Heart right ventricle (tissue), 16 donors: ENCODE measurements at regions of chr5 and their contacts with region 1.

Region 1: DNA sequence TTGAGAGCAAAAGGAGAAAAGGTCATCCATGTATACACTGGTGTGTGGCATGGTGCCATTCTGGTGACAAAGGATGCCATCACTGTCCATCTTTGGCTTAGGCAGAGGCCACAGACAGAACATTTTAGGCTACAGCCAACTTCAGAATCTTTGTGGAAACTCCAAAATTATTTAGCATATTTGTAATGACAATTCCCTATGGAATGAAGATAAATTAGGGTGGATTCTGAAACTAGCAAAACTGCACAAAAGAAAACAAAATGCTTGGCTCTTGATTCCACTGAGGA is 92.5 kb downstream of the FBXW11 start:
- DNase-seq: no peak
- ATAC-seq: no peak
- H3K4me3 ChIP-seq: no peak overlapping the region
- H3K27ac ChIP-seq: no peak overlapping the region
- H3K4me1 ChIP-seq: peaks cover 3 to 47% (median 43%) of the 10 kb centered on the region in 9 donors
- H3K27me3 ChIP-seq: no peaks in the 10 kb centered on the region
- CTCF ChIP-seq: no peak

Region 2: DNA sequence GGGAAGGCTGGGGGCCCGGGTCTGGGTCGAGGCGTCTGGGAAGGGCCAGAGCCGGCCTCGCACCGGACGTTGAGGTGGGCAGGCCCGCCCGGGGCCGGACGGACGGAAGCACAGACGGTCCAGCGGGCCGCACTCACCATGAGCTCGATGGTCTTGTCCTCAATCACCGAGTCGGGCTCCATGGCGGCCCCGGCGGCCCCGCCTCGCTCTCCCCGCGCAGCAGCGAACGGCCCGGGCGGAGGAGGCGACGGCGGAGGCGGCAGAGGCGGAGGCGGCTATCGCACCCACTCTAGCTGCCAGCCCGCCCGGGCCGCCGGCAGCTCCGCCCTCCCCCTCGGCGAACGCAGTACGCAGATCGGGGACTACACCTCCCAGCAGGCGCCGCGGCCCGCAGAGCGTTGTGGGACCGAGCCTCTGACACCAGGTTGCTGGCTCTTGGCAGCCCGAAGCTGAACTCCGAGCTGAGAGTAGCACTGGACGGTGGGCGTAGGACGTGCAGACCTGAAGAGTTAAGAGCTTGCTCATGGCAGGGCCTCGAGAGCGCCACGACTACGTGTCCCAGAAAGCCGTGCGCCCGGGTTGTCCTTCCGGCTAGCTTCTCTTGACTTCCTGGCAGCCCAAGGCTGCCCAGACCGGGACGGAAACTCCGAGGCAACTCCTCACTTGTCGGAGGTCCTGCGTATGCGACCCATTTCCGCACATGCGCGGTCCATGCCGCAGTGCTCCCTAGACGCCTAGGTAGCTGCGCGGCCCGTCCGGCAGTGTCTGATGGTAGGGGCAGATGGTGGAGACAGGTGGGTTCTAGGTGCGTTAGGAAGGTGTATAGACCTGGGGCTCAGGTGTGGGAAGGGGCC is 92.6 kb after region 1 on chr5 and contains the start of gene FBXW11:
- intact Hi-C with region 1: loop called in 7 of 10 experiments (anchors 2 to 10 kb)
- DNase-seq: peak; percentile 95 to 96
- ATAC-seq: peak; percentile 95 to 97 (median 96)
- H3K4me3 ChIP-seq: peak within 1 kb of the TSS; percentile 79 to 99 (median 91)
- H3K27ac ChIP-seq: peak within 1 kb of the TSS; percentile 90 to 99 (median 98)
- H3K4me1 ChIP-seq: peaks cover 20 to 65% (median 53%) of the 10 kb centered on the region in 9 donors
- H3K27me3 ChIP-seq: no peaks in the 10 kb centered on the region
- CTCF ChIP-seq: no peak
- total RNA-seq, gene FBXW11: 51.4 to 108 (median 83.3) TPM

Region 3: GRCh38 chr5:172035039-172035438 is 121.1 kb after region 1 on chr5:
- intact Hi-C with region 1: loop called (anchors 1 to 5 kb)
- DNase-seq: no peak
- ATAC-seq: no peak
- H3K4me3 ChIP-seq: no peak overlapping the region
- H3K27ac ChIP-seq: no peak overlapping the region
- H3K4me1 ChIP-seq: peaks cover 0 to 5% (median 0%) of the 10 kb centered on the region in 9 donors
- H3K27me3 ChIP-seq: no peaks in the 10 kb centered on the region
- CTCF ChIP-seq: no peak

Region 4: DNA sequence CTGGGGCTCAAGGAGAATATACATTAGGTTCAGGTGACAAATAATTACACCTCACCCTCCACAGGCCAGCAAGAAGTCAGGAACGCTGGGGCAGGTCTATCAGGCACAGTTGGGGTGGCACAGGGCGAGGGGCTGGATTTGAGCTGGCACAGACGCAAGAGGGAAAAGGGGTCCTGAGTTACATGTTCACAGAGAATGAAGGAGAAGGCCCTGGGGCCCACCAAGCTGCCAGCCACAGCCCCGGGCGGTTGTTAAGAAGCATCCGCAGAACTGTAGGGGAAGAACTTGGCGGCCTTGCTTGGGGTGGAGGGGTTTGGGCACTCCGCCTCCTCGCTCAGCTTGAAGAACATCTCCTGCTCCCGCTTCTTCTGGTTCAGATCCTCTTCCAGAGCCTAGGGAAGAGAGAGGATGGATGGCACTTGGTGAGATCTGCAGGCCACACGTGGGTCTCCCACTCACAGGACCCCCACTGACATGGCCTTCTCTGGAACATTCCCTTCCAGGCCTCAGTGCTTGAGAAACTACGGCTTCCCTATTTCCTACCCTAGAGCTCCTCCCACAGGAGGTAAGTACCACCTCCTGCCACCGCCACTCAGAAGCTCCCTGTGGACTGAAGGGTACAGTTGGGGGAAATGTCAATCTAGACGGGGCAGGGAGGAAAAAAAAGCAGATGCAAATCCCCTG is 130.8 kb after region 1 on chr5:
- intact Hi-C with region 1: loop called (anchors 1 to 5 kb)
- DNase-seq: no peak
- ATAC-seq: no peak
- H3K4me3 ChIP-seq: no peak overlapping the region
- H3K27ac ChIP-seq: peak overlapping the region in 1 of 10 donors; percentile 15
- H3K4me1 ChIP-seq: peaks cover 0 to 28% (median 14%) of the 10 kb centered on the region in 9 donors
- H3K27me3 ChIP-seq: no peaks in the 10 kb centered on the region
- CTCF ChIP-seq: no peak

Region 5: GRCh38 chr5:172059661-172060100 is 145.8 kb after region 1 on chr5:
- intact Hi-C with region 1: loop called in 3 of 10 experiments (anchors 5 kb)
- DNase-seq: no peak
- ATAC-seq: peak in 3 of 8 donors; percentile 13 to 28 (median 26)
- H3K4me3 ChIP-seq: no peak overlapping the region
- H3K27ac ChIP-seq: no peak overlapping the region
- H3K4me1 ChIP-seq: no peaks in the 10 kb centered on the region
- H3K27me3 ChIP-seq: no peaks in the 10 kb centered on the region
- CTCF ChIP-seq: peak in 8 of 9 donors; percentile 41 to 70 (median 60)

Region 6: DNA sequence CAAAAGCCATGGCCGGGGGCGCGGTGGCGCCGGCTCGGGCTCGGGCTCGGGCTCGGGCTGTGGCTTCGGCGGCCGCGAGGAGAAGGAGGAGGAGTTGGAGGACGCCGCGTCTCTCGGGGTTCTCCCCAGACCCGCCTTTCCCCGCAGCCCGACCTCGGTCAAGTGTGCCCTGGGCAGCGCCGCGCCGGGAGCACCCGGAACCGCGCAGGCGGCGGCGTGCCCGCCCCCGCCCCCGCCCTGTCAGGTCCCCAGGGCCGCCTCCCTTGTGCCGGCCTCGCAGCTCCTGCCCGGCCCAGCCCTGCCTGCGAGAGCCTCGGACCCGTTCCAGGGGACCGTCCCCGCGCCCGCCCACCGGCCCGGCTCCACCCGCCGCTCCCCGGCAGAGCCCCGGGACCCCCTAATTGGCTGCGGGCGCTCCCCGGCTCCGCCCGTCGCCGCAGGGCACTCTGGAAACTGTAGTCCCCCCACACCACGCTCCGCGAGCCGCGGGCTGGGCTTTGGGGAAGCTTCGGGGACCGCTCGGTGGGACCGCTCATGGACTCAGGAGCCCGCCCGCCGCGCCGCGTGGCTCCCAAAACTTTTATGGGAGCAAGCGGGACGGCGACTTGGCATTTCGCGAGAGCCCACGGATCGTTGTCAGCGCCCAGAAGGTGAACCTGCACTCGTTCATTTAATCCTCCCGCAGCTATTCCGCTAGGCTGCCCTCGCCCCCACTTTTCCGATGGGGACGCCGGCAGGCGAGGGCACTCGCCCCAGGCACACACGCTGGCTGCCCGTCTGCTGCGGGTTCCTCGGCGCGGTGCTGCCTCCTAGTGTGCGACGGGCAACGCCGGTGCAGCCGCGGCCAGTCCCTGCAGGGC is 274.3 kb after region 1 on chr5 and contains the start of gene STK10:
- intact Hi-C with region 1: loop called in 2 of 10 experiments (anchors 5 to 10 kb)
- DNase-seq: peak; percentile 92 to 95
- ATAC-seq: peak; percentile 93 to 98 (median 96)
- H3K4me3 ChIP-seq: peak within 1 kb of the TSS; percentile 76 to 100 (median 96)
- H3K27ac ChIP-seq: peak within 1 kb of the TSS; percentile 66 to 99 (median 96)
- H3K4me1 ChIP-seq: peaks cover 0 to 44% (median 35%) of the 10 kb centered on the region in 9 donors
- H3K27me3 ChIP-seq: no peaks in the 10 kb centered on the region
- CTCF ChIP-seq: peak; percentile 82 to 98 (median 91)
- total RNA-seq, gene STK10: 5.6 to 22.3 (median 9.8) TPM

Region 7: DNA sequence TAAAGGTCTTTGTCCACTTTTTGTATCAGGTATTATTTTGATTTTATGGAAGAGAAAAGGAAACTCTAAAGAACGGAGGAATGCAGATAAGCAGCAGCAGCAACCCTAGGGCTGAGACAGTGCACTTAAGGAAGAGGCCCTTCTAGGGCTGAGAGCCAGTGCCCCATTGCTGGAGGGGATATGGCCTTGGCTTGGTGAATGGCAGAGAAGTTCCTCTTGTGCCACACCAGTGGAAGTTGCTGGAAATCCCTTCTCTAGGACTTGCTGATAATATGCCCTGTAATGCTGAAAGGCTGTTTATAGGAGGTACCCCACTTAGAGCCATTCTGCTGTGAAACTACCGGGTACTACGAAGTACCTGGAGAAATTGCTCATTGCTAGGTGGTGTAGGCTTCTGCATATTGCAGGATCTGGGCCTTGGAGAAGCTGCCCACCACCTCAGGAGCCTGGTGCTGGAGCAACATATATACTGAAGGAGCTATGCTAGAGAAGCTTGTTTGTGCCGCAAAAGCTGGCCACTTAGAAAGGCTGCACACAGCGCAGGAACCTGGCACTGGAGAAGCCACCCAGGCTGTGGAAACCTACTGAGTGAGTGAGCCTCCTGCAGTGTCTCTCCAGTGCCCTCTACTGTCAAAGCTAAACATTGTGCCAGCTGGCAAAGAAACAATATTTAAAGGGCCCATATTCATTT is 379.3 kb after region 1 on chr5:
- intact Hi-C with region 1: loop called in 3 of 10 experiments (anchors 5 to 10 kb)
- DNase-seq: peak; percentile 44 to 58
- ATAC-seq: peak; percentile 92 to 98 (median 94)
- H3K4me3 ChIP-seq: no peak overlapping the region
- H3K27ac ChIP-seq: no peak overlapping the region
- H3K4me1 ChIP-seq: peaks cover 0 to 9% (median 4%) of the 10 kb centered on the region in 9 donors
- H3K27me3 ChIP-seq: peaks cover 0 to 3% (median 0%) of the 10 kb centered on the region in 7 donors
- CTCF ChIP-seq: peak; percentile 69 to 91 (median 83)